ENCODE measurements at regions of chr2 and their contacts with region 1.

Region 1: DNA sequence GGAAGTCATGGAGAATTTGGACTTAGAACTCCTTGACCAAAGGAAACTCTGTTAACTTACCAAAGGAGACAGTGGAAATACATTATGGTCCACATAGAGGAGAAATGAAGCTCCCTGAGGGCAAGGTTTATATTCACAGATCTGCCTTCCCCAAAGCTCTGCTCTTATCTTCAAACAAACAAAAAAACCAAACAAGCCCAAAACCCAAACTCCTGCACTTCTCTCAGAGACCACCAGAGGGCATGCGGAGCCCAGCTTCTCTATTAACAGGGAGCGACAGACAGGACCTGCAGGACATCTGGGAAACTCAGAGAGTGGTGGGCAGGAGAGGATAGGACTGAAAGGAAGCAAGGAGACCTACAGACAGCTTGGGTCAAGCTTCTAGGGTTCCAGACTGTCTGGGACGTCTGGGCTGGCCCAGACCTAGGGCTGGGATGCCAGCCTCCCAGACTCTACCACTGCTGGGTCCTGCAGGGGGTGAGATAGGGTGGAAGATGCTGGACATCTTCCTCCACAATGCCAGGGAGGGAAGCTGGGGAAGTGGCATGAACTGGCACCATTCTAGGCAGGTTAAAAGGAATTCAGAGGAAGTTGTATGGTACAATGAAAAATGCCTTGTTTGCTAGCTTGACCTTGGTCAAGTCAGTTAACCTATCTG is 4.0 kb upstream of the WNT10A start:
- DNase-seq: peak in 1 of 2 experiments; percentile 90
- H3K4me3 ChIP-seq: no peak overlapping the region
- H3K27ac ChIP-seq: no peak overlapping the region
- H3K4me1 ChIP-seq: peaks cover 0 to 42% (median 27%) of the 10 kb centered on the region in 4 experiments; a peak in 6 of 7 replicates
- H3K27me3 ChIP-seq: peaks cover 97 to 100% (median 99%) of the 10 kb centered on the region in 4 experiments
- CTCF ChIP-seq: peak in 2 of 3 experiments; percentile 94 to 96; a peak in 3 of 4 replicates
- EP300 ChIP-seq: no peak
- POLR2A ChIP-seq: no peak
- RAD21 ChIP-seq: peak; percentile 90 to 97

Region 2: GRCh38 chr2:218709908-218710307 is 166.8 kb before region 1 on chr2:
- CTCF ChIA-PET with region 1: no interaction called
- POLR2A ChIA-PET with region 1: no interaction called
- DNase-seq: no peak
- H3K4me3 ChIP-seq: peak overlapping the region in 1 of 4 experiments; percentile 89; a peak in 1 of 8 replicates
- H3K27ac ChIP-seq: no peak overlapping the region
- H3K4me1 ChIP-seq: peaks cover 0 to 4% (median 1%) of the 10 kb centered on the region in 4 experiments; a peak in 4 of 7 replicates
- H3K27me3 ChIP-seq: no peaks in the 10 kb centered on the region
- CTCF ChIP-seq: no peak
- EP300 ChIP-seq: no peak
- POLR2A ChIP-seq: no peak
- RAD21 ChIP-seq: no peak

Region 3: GRCh38 chr2:218860950-218861381 is 15.7 kb before region 1 on chr2:
- CTCF ChIA-PET with region 1: interaction called, 83 read pairs
- POLR2A ChIA-PET with region 1: interaction called, 4 read pairs
- DNase-seq: peak; percentile 80 to 82
- H3K4me3 ChIP-seq: peak overlapping the region in 2 of 4 experiments; percentile 19 to 53; a peak in 3 of 8 replicates
- H3K27ac ChIP-seq: no peak overlapping the region
- H3K4me1 ChIP-seq: peaks cover 6 to 33% (median 17%) of the 10 kb centered on the region in 4 experiments
- H3K27me3 ChIP-seq: peaks cover 67 to 94% (median 90%) of the 10 kb centered on the region in 4 experiments
- CTCF ChIP-seq: no peak
- EP300 ChIP-seq: no peak
- POLR2A ChIP-seq: no peak
- RAD21 ChIP-seq: no peak

Region 4: DNA sequence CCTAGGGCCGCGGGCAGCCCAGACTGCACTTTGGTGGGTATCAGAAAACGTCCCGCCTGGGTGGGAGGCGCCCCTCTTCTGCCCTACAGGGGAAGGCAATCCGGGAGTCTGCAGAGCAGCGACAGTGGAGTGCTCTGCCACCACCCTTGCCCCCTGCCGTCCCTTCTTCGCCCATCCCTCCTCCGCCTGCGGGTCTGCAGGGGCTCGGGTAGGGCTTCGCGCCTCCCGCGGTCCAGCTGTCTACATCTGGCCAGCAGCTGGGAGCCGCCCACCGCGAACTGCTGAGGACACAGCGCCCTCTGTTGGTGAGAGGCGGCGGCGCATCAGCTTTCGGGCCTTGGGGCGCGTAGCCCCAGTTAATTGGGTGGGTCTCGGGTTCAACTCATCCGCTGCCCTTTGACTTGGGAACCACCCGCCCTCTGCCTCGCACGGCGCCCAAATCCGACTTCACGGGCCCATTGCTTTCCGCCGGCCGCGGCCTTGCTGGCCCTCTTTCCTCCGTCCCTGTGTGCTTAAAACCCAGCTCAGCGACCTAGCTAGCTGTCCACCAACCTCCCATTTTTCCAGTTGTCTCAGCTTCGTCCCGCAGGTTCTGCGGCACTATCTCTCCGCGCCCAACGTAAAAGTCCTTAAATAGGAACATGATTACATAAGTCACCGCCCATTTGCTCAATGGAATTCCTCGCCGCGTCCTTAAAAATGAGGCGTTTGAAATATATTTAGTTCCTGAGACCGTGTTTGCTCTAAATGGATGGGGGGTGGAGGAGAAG is 21.6 kb after region 1 on chr2:
- CTCF ChIA-PET with region 1: interaction called, 783 read pairs
- POLR2A ChIA-PET with region 1: interaction called, 6 read pairs
- DNase-seq: peak; percentile 68 to 99
- H3K4me3 ChIP-seq: peak overlapping the region in 1 of 4 experiments; percentile 54; a peak in 2 of 8 replicates
- H3K27ac ChIP-seq: no peak overlapping the region
- H3K4me1 ChIP-seq: peaks cover 3 to 35% (median 13%) of the 10 kb centered on the region in 4 experiments
- H3K27me3 ChIP-seq: peaks cover 64 to 81% (median 72%) of the 10 kb centered on the region in 4 experiments
- CTCF ChIP-seq: peak in 2 of 3 experiments; percentile 96 to 97; a peak in 3 of 4 replicates
- EP300 ChIP-seq: no peak
- POLR2A ChIP-seq: no peak
- RAD21 ChIP-seq: peak; percentile 82 to 92

Region 5: GRCh38 chr2:218953481-218953881 is 76.8 kb after region 1 on chr2:
- CTCF ChIA-PET with region 1: interaction called, 17 read pairs
- POLR2A ChIA-PET with region 1: no interaction called
- DNase-seq: peak in 1 of 2 experiments; percentile 69
- H3K4me3 ChIP-seq: no peak overlapping the region
- H3K27ac ChIP-seq: no peak overlapping the region
- H3K4me1 ChIP-seq: peaks cover 0 to under 1% (median 0%) of the 10 kb centered on the region in 4 experiments; a peak in 1 of 7 replicates
- H3K27me3 ChIP-seq: peaks cover 4 to 29% (median 15%) of the 10 kb centered on the region in 4 experiments
- CTCF ChIP-seq: peak; percentile 57 to 71 (median 65)
- EP300 ChIP-seq: no peak
- POLR2A ChIP-seq: no peak
- RAD21 ChIP-seq: peak in 1 of 2 experiments; percentile 19; a peak in 2 of 4 replicates

Region 6: GRCh38 chr2:218995972-218996711 is 119.5 kb after region 1 on chr2:
- CTCF ChIA-PET with region 1: interaction called, 92 read pairs
- POLR2A ChIA-PET with region 1: interaction called, 3 read pairs
- DNase-seq: peak in 1 of 2 experiments; percentile 99
- H3K4me3 ChIP-seq: peak overlapping the region in 3 of 4 experiments; percentile 27 to 49 (median 34); a peak in 4 of 8 replicates
- H3K27ac ChIP-seq: no peak overlapping the region
- H3K4me1 ChIP-seq: peaks cover 0 to 43% (median 26%) of the 10 kb centered on the region in 4 experiments; a peak in 6 of 7 replicates
- H3K27me3 ChIP-seq: peaks cover 98 to 100% (median 99%) of the 10 kb centered on the region in 4 experiments
- CTCF ChIP-seq: peak in 2 of 3 experiments; percentile 88; a peak in 3 of 4 replicates
- EP300 ChIP-seq: 0 out of 3 replicates have a peak, but pooled peaks of 1 of the 2 experiments have one; percentile 20
- POLR2A ChIP-seq: no peak
- RAD21 ChIP-seq: peak; percentile 79 to 89

Measured in H1 (cell line).